Dorsolateral prefrontal cortex (tissue), 120 donors: ENCODE measurements at regions of chr2 and their contacts with region 1.

Region 1: DNA sequence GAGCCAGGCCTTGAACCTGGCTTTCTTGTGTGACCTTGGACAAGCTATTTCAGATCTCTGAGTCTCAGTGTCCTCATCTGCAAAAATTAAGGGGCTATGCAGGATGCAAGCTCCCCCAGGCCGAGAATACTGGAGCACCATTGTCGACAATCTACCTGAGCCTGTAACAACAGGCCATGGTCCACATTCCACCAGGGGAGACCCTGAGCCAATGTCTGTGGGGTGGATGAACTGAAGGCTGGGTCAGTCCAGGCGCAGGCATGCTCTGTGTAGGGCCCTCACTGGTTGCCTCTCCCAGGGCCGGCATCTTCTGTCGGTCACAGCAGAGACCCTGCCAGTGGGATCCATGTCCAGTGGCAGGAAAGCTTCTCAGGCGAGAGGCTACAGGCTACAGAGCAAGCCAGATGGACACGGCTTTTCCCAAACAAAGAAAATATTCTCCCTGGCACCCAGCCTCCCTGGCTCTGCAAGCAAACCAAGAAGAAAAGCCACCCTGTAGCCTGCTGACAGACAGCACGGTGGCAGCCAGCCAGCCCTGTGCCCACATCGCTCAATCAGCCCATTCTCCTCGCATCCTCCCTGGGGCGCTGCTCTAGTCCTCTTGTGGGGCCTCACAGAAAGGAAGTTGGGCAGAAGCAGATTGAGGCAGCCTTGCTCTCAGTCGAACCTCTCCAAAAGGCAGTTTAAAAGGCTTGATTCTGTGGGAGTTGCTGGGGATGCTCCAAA is 48.7 kb upstream of the FZD7 start:
- DNase-seq: peak; percentile 83 to 95 (median 91)
- H3K4me3 ChIP-seq: peak overlapping the region in 5 of 59 donors; percentile 3 to 29 (median 8)
- H3K27ac ChIP-seq: peak overlapping the region in 43 of 59 donors; percentile 0 to 88 (median 48)
- H3K27me3 ChIP-seq: peaks cover 0 to 14% (median 0%) of the 10 kb centered on the region in 45 donors
- CTCF ChIP-seq: peak in 37 of 56 donors; percentile 7 to 60 (median 30)

Region 2: GRCh38 chr2:202033321-202034248 is 48.6 kb after region 1 on chr2 and contains the start of gene FZD7:
- intact Hi-C with region 1: loop called (anchors 5 kb)
- DNase-seq: peak; percentile 59 to 94 (median 68)
- H3K4me3 ChIP-seq: peak within 1 kb of the TSS; percentile 44 to 83 (median 67)
- H3K27ac ChIP-seq: peak within 1 kb of the TSS in 55 of 59 donors; percentile 7 to 93 (median 74)
- H3K27me3 ChIP-seq: peaks cover 0 to 81% (median 30%) of the 10 kb centered on the region in 45 donors
- CTCF ChIP-seq: peak in 6 of 56 donors; percentile 4 to 35 (median 10)
- total RNA-seq, gene FZD7: 1.3 to 9.9 (median 4.1) TPM

Region 3: GRCh38 chr2:202084265-202084664 is 99.3 kb after region 1 on chr2:
- intact Hi-C with region 1: no loop called
- DNase-seq: peak in 1 of 10 donors; percentile 49
- H3K4me3 ChIP-seq: no peak overlapping the region
- H3K27ac ChIP-seq: peak overlapping the region in 1 of 59 donors; percentile 67
- H3K27me3 ChIP-seq: no peaks in the 10 kb centered on the region
- CTCF ChIP-seq: no peak